ENCODE measurements at regions of chr11 and their contacts with region 1.

Region 1: DNA sequence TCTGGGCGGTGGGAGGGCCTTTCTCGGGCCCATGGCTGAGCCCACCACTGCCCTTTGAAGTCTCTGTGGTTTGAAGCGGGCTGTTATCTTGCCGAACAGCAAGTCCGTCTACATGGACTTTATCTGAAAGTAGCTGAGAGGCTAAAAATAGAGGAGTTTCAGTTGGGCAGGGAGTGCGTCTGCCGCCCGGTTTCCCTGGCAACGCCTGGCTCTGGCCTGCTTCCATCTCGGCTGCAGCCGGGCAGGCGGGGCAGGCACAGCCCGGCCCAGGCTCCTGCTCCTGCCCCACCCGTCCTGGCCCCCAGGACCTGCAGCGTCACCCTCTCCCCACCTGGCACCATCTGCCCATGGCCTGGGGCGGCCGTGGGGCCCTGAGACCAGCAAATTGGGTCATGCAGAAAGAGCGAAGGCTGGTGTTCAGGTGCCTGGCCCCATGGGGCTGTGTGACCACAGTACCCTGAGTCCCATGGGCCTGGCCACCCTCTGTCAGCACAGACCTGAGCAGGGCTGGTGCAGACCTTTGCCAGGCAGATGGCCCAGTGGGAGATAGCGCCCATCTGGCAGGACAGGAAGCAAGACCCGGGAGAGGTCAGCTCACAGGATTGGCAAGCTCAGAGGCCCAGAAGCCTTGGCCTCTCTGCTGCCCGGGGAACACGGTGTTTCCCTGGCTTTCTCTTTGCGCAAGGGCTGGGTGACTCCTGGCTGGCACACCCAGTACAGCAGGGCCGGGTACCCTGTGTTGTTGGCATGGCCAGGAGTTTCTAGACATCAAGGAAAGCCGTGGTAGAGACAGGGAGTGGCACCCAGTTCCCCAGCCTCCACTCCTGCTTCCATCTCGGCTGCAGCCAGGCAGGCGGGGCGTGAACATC is 79.1 kb upstream of the KCNQ1OT1 start:
- DNase-seq: peak; percentile 76 to 85
- ATAC-seq: peak; percentile 86 to 93 (median 91)
- H3K4me3 ChIP-seq: peak overlapping the region in 6 of 10 donors; percentile 0 to 27 (median 17)
- H3K27ac ChIP-seq: peak overlapping the region; percentile 60 to 94 (median 80)
- H3K4me1 ChIP-seq: peaks cover 30 to 49% (median 43%) of the 10 kb centered on the region in 9 donors
- H3K27me3 ChIP-seq: no peaks in the 10 kb centered on the region
- CTCF ChIP-seq: peak in 6 of 9 donors; percentile 15 to 58 (median 43)

Region 2: GRCh38 chr11:2837096-2837601 is 58.3 kb after region 1 on chr11:
- intact Hi-C with region 1: loop called in 1 of 10 experiments (anchors 5 kb)
- DNase-seq: peak; percentile 83 to 85
- ATAC-seq: peak; percentile 71 to 92 (median 84)
- H3K4me3 ChIP-seq: peak overlapping the region in 2 of 10 donors; percentile 1 to 14
- H3K27ac ChIP-seq: peak overlapping the region; percentile 24 to 79 (median 68)
- H3K4me1 ChIP-seq: peaks cover 14 to 57% (median 29%) of the 10 kb centered on the region in 9 donors
- H3K27me3 ChIP-seq: no peaks in the 10 kb centered on the region
- CTCF ChIP-seq: peak; percentile 28 to 59 (median 37)